ENCODE measurements at regions of chr16 and their contacts with region 1.

Region 1: DNA sequence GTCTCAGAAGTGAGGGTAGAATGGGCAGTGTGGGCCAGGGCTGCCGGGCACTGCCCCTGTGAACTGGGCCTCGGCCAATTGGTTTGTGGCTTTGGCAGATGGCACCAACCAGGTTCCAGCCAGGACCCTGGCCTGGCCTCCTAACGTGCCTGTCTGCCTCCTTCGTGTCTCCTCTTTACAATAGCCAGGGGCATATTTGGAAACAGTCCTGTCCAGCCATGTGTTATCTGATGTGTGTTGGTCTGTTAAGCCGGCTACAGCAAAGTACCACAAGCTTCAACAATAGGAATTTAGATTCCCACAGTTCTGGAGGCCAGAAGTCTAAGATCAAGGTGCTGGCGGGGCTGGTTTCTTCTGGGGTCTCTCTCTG is 14.6 kb downstream of the CRISPLD2 start:
- DNase-seq: no peak
- H3K4me3 ChIP-seq: no peak overlapping the region
- H3K27ac ChIP-seq: peak overlapping the region; percentile 96 to 100 (median 98)
- H3K4me1 ChIP-seq: peaks cover 0 to 96% (median 96%) of the 10 kb centered on the region in 4 donors
- H3K27me3 ChIP-seq: no peaks in the 10 kb centered on the region
- CTCF ChIP-seq: no peak
- EP300 ChIP-seq: peak; percentile 37 to 75 (median 45)
- POLR2A ChIP-seq: no peak

Region 2: GRCh38 chr16:84738255-84739038 is 95.9 kb before region 1 on chr16:
- intact Hi-C with region 1: no loop called
- DNase-seq: peak; percentile 83
- H3K4me3 ChIP-seq: no peak overlapping the region
- H3K27ac ChIP-seq: peak overlapping the region in 3 of 4 donors; percentile 3 to 57 (median 33)
- H3K4me1 ChIP-seq: peaks cover 0 to 80% (median 57%) of the 10 kb centered on the region in 4 donors
- H3K27me3 ChIP-seq: no peaks in the 10 kb centered on the region
- CTCF ChIP-seq: peak; percentile 45 to 92 (median 86)
- EP300 ChIP-seq: no peak
- POLR2A ChIP-seq: no peak

Region 3: DNA sequence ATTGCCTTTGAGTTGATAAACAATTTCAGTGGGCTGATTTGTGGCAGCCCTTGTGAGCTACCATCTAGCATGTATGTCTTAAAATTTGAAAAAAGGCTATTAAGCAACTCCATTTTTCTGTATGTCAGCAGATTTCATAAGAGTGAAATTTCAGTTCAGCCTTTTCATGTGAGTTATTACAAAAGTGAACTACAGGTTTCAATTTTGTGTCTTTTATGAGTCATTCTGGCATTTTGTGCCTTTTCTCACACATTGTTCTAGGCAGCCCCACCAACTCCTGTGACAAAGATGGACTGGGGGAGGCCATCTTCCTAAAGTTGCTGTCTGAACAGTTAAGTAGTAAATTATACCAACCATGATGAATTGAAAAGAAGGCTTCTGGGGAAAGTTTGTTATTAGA is 82.4 kb before region 1 on chr16:
- intact Hi-C with region 1: no loop called
- DNase-seq: no peak
- H3K4me3 ChIP-seq: no peak overlapping the region
- H3K27ac ChIP-seq: peak overlapping the region in 1 of 4 donors; percentile 7
- H3K4me1 ChIP-seq: peaks cover 0 to 58% (median 30%) of the 10 kb centered on the region in 4 donors
- H3K27me3 ChIP-seq: no peaks in the 10 kb centered on the region
- CTCF ChIP-seq: no peak
- EP300 ChIP-seq: no peak
- POLR2A ChIP-seq: no peak

Region 4: GRCh38 chr16:84795329-84796053 is 38.9 kb before region 1 on chr16:
- intact Hi-C with region 1: loop called (anchors 2 kb)
- DNase-seq: peak; percentile 97
- H3K4me3 ChIP-seq: peak overlapping the region; percentile 21 to 39 (median 26)
- H3K27ac ChIP-seq: peak overlapping the region; percentile 74 to 85 (median 80)
- H3K4me1 ChIP-seq: peaks cover 0 to 19% (median 17%) of the 10 kb centered on the region in 4 donors
- H3K27me3 ChIP-seq: no peaks in the 10 kb centered on the region
- CTCF ChIP-seq: no peak
- EP300 ChIP-seq: peak; percentile 60 to 98 (median 84)
- POLR2A ChIP-seq: peak in 1 of 2 donors; percentile 19

Region 5: DNA sequence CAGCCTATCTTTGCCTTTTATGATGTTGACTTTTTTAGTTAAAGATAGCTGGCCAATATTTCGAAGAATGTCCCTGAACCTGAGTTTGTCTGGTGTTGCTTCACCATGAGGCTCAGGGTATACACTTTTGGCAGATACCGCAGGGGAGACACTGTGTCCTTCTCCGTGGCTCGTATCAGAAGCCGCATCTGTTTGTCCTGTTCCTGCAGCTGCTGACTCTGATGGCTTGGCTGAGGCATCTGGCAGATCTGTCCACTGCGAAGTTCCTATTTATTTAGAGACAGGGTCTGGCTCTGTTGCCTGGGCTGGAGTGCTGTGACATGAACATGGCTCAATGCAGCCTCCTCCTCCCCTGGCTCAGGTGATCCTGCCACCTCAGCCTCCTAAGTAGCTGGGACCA is 78.9 kb after region 1 on chr16:
- intact Hi-C with region 1: no loop called
- DNase-seq: peak; percentile 94
- H3K4me3 ChIP-seq: no peak overlapping the region
- H3K27ac ChIP-seq: peak overlapping the region in 3 of 4 donors; percentile 21 to 36 (median 31)
- H3K4me1 ChIP-seq: peaks cover 0 to 20% (median 6%) of the 10 kb centered on the region in 4 donors
- H3K27me3 ChIP-seq: no peaks in the 10 kb centered on the region
- CTCF ChIP-seq: no peak
- EP300 ChIP-seq: no peak
- POLR2A ChIP-seq: no peak

Measured in sigmoid colon (tissue), 7 donors.